RWPE1 (cell line): ENCODE measurements at regions of chr18 and their contacts with region 1.

Region 1: GRCh38 chr18:51192026-51192425 is 5.5 kb downstream of the MEX3C start:
- DNase-seq: no peak
- H3K27ac ChIP-seq: no peak overlapping the region
- CTCF ChIP-seq: no peak

Region 2: GRCh38 chr18:49561289-49562193 is 1630.5 kb before region 1 on chr18 and contains the start of gene LIPG:
- CTCF ChIA-PET with region 1: no interaction called
- POLR2A ChIA-PET with region 1: no interaction called
- DNase-seq: peak; percentile 90
- H3K27ac ChIP-seq: peak within 1 kb of the TSS; percentile 73
- CTCF ChIP-seq: no peak

Region 3: DNA sequence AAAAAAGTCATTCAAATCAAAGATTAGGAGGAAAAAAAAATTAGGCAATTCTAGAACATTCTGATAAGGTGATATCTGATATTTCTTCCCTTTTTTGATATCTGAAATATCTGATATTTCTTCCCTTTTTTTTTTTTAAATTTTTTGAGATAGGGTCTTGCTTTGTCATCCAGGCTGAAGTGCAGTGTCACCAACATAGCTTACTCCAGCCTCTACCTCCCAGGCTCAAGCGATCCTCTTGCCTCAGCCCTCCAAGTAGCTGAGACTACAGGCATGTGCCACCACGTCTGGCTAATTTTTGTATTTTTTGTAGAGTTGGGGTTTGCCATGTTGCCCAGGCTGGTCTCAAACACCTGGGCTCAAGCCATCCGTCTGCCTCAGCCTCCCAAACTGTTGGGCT is 28.5 kb before region 1 on chr18:
- CTCF ChIA-PET with region 1: interaction called, 11 read pairs
- POLR2A ChIA-PET with region 1: no interaction called
- DNase-seq: no peak
- H3K27ac ChIP-seq: no peak overlapping the region
- CTCF ChIP-seq: no peak

Region 4: DNA sequence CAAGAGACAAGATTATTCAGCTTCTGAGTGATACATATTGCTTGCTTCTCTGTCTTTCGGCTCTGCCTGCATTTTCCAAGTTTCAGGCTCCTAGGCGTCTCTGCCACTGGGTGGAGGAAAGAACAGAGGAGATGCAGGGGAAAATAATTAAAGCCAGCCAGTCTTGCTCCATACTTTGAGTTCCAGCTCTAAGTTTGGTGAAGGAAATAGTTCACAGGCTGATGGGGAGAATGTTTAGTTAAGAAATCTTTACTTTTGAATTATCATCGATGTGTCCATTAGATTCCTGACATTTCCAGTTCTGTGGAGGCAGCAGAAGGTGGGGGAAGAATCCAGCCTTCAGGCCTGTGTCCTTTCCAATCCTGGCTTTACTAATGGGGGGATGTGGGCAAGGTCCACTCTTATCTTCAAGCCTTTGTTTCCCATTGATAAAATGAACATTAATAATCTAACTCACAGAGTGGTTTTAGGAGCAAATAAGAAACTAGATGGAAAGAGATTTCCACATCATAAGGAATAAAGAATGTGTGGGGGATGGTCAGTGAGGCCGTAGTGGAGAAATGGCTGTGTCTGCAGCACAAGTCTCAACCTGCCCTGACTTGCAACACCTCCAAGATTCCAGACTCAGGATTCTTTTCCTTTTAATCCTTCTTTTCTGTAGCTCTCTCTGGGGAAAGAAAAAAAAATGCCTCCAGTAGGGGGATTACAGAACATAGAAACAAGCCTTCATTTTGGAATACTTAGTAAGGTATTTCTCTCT is 129.5 kb after region 1 on chr18:
- CTCF ChIA-PET with region 1: no interaction called
- POLR2A ChIA-PET with region 1: no interaction called
- DNase-seq: peak; percentile 74
- H3K27ac ChIP-seq: peak overlapping the region; percentile 78
- CTCF ChIP-seq: no peak